ENCODE measurements at regions of chr22 and their contacts with region 1.

Region 1: DNA sequence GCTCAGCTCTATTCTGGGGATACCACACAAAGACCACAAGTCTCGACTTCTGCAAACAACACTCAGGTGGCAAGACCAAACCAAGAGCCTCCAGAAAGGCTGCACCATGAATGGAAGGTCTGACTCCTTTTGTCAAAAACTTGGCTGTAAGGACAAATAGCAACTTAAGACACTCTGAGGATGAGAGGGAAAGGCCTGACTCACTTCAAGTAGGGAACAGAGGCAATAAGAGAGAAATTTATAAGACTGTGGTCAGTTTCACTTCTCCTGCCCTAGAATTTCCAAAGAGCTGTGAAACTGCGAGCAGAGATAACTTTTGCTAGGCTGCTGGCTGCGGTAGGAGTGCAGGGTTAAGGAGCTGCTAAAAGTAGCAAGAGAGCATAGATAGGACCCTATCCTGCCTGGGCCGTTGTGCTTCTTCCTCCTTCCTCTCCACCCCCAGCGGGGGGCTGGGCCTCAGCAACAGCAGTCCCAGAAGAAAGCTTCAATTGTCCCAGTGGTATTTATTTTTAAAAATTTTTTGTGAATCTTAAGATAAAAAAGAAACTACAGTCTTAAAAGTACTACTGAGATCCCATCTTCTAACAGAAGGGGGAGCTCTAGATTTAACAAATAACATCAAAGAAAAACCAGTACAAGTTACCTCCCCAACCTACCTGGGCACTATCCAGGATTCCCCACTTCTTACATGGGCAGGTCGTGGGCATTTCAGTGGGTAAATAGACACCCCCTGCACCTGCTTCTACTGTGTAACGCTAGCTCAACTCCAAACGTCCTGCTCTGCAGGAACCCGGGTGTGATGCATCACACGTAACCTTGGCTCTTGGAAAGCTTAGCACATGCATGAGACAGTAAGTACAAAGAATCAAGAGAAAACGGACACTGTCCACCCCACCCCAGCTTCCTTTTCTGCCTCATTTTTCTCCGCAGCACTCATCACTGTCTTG is 66.4 kb downstream of the SGSM3 start:
- DNase-seq: peak; percentile 84
- ATAC-seq: peak; percentile 67
- H3K4me3 ChIP-seq: peak overlapping the region; percentile 6 to 44 (median 32)
- H3K4me3 Mint-ChIP-seq: peak overlapping the region; percentile 82
- H3K27ac ChIP-seq: peak overlapping the region; percentile 61 to 69
- H3K27ac Mint-ChIP-seq: peak overlapping the region; percentile 94
- H3K4me1 ChIP-seq: peaks cover 83 to 99% of the 10 kb centered on the region in 2 donors
- H3K4me1 Mint-ChIP-seq: peaks cover 87% of the 10 kb centered on the region
- H3K27me3 ChIP-seq: no peaks in the 10 kb centered on the region
- H3K27me3 Mint-ChIP-seq: no peaks in the 10 kb centered on the region
- CTCF ChIP-seq: peak; percentile 82

Region 2: GRCh38 chr22:40385036-40385782 is 51.6 kb before region 1 on chr22:
- CTCF ChIA-PET with region 1: interaction called, 15 read pairs
- POLR2A ChIA-PET with region 1: interaction called, 5 read pairs
- intact Hi-C with region 1: no loop called
- DNase-seq: peak; percentile 82
- ATAC-seq: peak; percentile 98
- H3K4me3 ChIP-seq: peak overlapping the region; percentile 18 to 63 (median 50)
- H3K4me3 Mint-ChIP-seq: peak overlapping the region; percentile 85
- H3K27ac ChIP-seq: peak overlapping the region; percentile 82 to 87
- H3K27ac Mint-ChIP-seq: peak overlapping the region; percentile 92
- H3K4me1 ChIP-seq: peaks cover 59 to 75% of the 10 kb centered on the region in 2 donors
- H3K4me1 Mint-ChIP-seq: peaks cover 63% of the 10 kb centered on the region
- H3K27me3 ChIP-seq: no peaks in the 10 kb centered on the region
- H3K27me3 Mint-ChIP-seq: no peaks in the 10 kb centered on the region
- CTCF ChIP-seq: peak; percentile 30

Region 3: GRCh38 chr22:40426594-40427333 is 10.0 kb before region 1 on chr22:
- CTCF ChIA-PET with region 1: interaction called, 26 read pairs
- POLR2A ChIA-PET with region 1: no interaction called
- intact Hi-C with region 1: no loop called
- DNase-seq: no peak
- ATAC-seq: no peak
- H3K4me3 ChIP-seq: no peak overlapping the region
- H3K4me3 Mint-ChIP-seq: no peak overlapping the region
- H3K27ac ChIP-seq: no peak overlapping the region
- H3K27ac Mint-ChIP-seq: no peak overlapping the region
- H3K4me1 ChIP-seq: peaks cover 3 to 15% of the 10 kb centered on the region in 2 donors
- H3K4me1 Mint-ChIP-seq: peaks cover 20% of the 10 kb centered on the region
- H3K27me3 ChIP-seq: no peaks in the 10 kb centered on the region
- H3K27me3 Mint-ChIP-seq: no peaks in the 10 kb centered on the region
- CTCF ChIP-seq: no peak

Region 4: DNA sequence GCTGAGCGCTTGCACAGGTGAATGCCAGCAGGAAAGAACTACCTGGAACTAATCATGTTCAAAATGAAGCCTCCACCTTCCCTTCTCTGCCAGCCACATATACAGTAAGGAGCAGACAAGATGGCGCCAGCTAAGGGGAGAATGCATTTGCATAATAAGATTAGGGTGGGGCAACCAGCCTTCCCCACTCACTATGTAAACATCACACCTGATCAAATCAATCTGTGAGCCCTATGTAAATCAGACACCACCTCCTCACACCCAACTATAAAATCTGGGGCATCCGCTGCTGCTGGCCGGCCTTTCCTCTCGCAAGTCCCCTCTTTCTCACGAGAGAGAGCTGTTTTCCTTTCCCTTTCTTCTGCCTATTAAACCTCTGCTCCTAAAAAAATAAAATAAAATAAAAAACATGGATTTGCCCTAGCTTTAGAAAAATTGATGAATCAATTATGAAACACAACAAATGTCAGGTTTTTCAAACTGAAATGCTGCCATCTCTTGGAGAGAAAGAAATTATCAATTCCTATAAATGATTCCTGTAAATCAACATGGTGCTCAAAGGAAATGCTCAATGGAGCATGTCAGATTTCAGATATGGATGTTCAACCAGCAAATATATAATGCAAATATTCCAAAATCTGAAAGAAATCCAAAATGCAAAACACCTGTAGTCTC is 42.5 kb after region 1 on chr22:
- CTCF ChIA-PET with region 1: interaction called, 148 read pairs
- POLR2A ChIA-PET with region 1: no interaction called
- intact Hi-C with region 1: no loop called
- DNase-seq: no peak
- ATAC-seq: no peak
- H3K4me3 ChIP-seq: no peak overlapping the region
- H3K4me3 Mint-ChIP-seq: no peak overlapping the region
- H3K27ac ChIP-seq: no peak overlapping the region
- H3K27ac Mint-ChIP-seq: no peak overlapping the region
- H3K4me1 ChIP-seq: peaks cover 4 to 5% of the 10 kb centered on the region in 2 donors
- H3K4me1 Mint-ChIP-seq: peaks cover 15% of the 10 kb centered on the region
- H3K27me3 ChIP-seq: no peaks in the 10 kb centered on the region
- H3K27me3 Mint-ChIP-seq: no peaks in the 10 kb centered on the region
- CTCF ChIP-seq: no peak

Region 5: GRCh38 chr22:40636380-40637182 is 199.8 kb after region 1 on chr22 and contains the start of gene MRTFA:
- CTCF ChIA-PET with region 1: interaction called, 232 read pairs
- POLR2A ChIA-PET with region 1: no interaction called
- intact Hi-C with region 1: loop called (anchors 2 kb)
- DNase-seq: peak; percentile 99
- ATAC-seq: peak; percentile 90
- H3K4me3 ChIP-seq: peak within 1 kb of the TSS; percentile 81 to 99 (median 96)
- H3K4me3 Mint-ChIP-seq: peak within 1 kb of the TSS; percentile 98
- H3K27ac ChIP-seq: peak within 1 kb of the TSS; percentile 84 to 92
- H3K27ac Mint-ChIP-seq: peak within 1 kb of the TSS; percentile 97
- H3K4me1 ChIP-seq: peaks cover 24 to 30% of the 10 kb centered on the region in 2 donors
- H3K4me1 Mint-ChIP-seq: peaks cover 39% of the 10 kb centered on the region
- H3K27me3 ChIP-seq: no peaks in the 10 kb centered on the region
- H3K27me3 Mint-ChIP-seq: no peaks in the 10 kb centered on the region
- CTCF ChIP-seq: no peak
- total RNA-seq, gene MRTFA: 82.6 and 87.6 TPM in 2 replicates

Region 6: DNA sequence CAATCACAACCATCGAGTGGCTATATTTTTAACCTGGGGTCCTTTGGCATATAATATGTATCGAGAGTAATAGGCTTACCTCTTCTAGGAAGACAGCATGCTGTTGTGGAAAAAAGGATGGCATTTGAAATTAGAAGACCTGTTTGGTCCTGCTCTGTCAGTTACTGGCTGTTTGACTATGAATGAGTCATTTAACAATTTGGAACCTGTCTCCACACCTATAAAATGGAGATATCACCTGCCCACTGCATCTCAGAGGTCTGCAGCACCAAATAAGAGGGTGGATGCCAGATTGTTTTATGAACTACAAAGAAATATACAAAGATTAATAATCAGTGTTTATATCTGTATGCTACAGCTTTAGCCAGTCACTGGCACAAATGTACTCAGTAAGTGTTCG is 321.6 kb after region 1 on chr22:
- CTCF ChIA-PET with region 1: interaction called, 18 read pairs
- POLR2A ChIA-PET with region 1: no interaction called
- intact Hi-C with region 1: no loop called
- DNase-seq: no peak
- ATAC-seq: no peak
- H3K4me3 ChIP-seq: no peak overlapping the region
- H3K4me3 Mint-ChIP-seq: no peak overlapping the region
- H3K27ac ChIP-seq: no peak overlapping the region
- H3K27ac Mint-ChIP-seq: peak overlapping the region; percentile 11
- H3K4me1 ChIP-seq: peaks cover 12 to 18% of the 10 kb centered on the region in 2 donors
- H3K4me1 Mint-ChIP-seq: peaks cover 21% of the 10 kb centered on the region
- H3K27me3 ChIP-seq: no peaks in the 10 kb centered on the region
- H3K27me3 Mint-ChIP-seq: no peaks in the 10 kb centered on the region
- CTCF ChIP-seq: no peak